ENCODE measurements at regions of chr10 and their contacts with region 1.

Region 1: GRCh38 chr10:22003079-22003913 is at the start of gene DNAJC1:
- DNase-seq: peak; percentile 96 to 98 (median 96)
- H3K4me3 ChIP-seq: peak within 1 kb of the TSS; percentile 62 to 89
- H3K4me3 Mint-ChIP-seq: peak within 1 kb of the TSS; percentile 94 to 100 (median 98)
- H3K27ac ChIP-seq: peak within 1 kb of the TSS; percentile 84
- H3K27ac Mint-ChIP-seq: peak within 1 kb of the TSS; percentile 91 to 99 (median 97)
- H3K4me1 ChIP-seq: peaks cover 26% of the 10 kb centered on the region
- H3K4me1 Mint-ChIP-seq: peaks cover 23 to 45% (median 34%) of the 10 kb centered on the region in 4 donors
- H3K27me3 ChIP-seq: peaks cover 3% of the 10 kb centered on the region
- H3K27me3 Mint-ChIP-seq: peaks cover 0 to 4% of the 10 kb centered on the region in 2 donors
- total RNA-seq, gene DNAJC1: 15.0 to 16.7 TPM

Region 2: GRCh38 chr10:22022257-22023032 is 19.1 kb after region 1 on chr10:
- CTCF ChIA-PET with region 1: interaction called, 3 read pairs
- POLR2A ChIA-PET with region 1: interaction called, 8 read pairs
- intact Hi-C with region 1: loop called (anchors 1 kb)
- DNase-seq: peak; percentile 51 to 75 (median 60)
- H3K4me3 ChIP-seq: peak overlapping the region in 1 of 2 donors; percentile 39
- H3K4me3 Mint-ChIP-seq: peak overlapping the region; percentile 69 to 91 (median 86)
- H3K27ac ChIP-seq: peak overlapping the region; percentile 45
- H3K27ac Mint-ChIP-seq: peak overlapping the region; percentile 75 to 97 (median 95)
- H3K4me1 ChIP-seq: peaks cover 18% of the 10 kb centered on the region
- H3K4me1 Mint-ChIP-seq: peaks cover 15 to 21% (median 19%) of the 10 kb centered on the region in 4 donors
- H3K27me3 ChIP-seq: no peaks in the 10 kb centered on the region
- H3K27me3 Mint-ChIP-seq: peaks cover 0 to 4% of the 10 kb centered on the region in 2 donors

Region 3: DNA sequence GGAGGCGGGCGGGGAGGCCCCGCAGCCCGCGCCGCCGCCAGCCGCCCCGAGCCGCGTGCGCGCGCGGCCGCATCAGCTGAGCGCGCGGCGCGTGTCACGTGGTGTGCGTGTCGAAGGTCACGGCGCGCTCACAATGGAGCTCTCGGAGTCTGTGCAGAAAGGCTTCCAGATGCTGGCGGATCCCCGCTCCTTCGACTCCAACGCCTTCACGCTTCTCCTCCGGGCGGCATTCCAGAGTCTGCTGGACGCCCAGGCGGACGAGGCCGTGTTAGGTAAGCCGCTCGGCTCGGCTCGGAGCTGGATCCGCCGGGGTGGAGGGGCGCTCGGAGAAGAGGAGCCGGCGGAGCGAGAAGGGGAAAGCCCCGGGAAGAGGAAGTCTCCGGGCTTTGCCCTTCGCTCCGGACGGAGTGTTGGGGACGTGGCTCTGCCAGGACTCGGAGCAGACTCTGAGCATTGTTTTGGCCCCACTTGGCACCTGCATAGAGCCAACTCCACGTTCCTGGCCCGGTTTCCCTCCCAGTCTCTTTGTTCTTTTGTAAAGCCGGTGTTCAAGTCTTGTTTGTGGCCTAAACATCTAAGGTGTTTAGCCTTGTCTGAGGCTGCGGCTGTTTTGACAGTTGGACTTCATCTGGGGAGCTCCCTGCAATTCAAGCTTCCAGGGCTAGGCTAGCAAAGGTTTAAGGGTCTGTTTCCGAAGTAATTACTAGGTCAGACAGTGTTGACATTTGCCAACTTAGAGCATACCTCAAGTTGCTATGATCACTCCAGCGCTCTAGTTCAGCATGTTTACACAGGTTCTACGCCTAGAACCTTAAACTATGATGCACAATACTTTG is 313.2 kb after region 1 on chr10 and contains the start of gene COMMD3:
- CTCF ChIA-PET with region 1: no interaction called
- POLR2A ChIA-PET with region 1: interaction called, 17 read pairs
- intact Hi-C with region 1: loop called (anchors 1 kb)
- DNase-seq: peak; percentile 78 to 86 (median 82)
- H3K4me3 ChIP-seq: peak within 1 kb of the TSS; percentile 77 to 95
- H3K4me3 Mint-ChIP-seq: peak within 1 kb of the TSS; percentile 94 to 99 (median 98)
- H3K27ac ChIP-seq: peak within 1 kb of the TSS; percentile 71
- H3K27ac Mint-ChIP-seq: peak within 1 kb of the TSS; percentile 89 to 98 (median 98)
- H3K4me1 ChIP-seq: peaks cover 37% of the 10 kb centered on the region
- H3K4me1 Mint-ChIP-seq: peaks cover 22 to 50% (median 29%) of the 10 kb centered on the region in 4 donors
- H3K27me3 ChIP-seq: no peaks in the 10 kb centered on the region
- H3K27me3 Mint-ChIP-seq: peaks cover 3 to 4% of the 10 kb centered on the region in 2 donors
- total RNA-seq, gene COMMD3: 67.9 to 68.5 TPM

Region 4: GRCh38 chr10:22550732-22551131 is 547.4 kb after region 1 on chr10:
- CTCF ChIA-PET with region 1: no interaction called
- POLR2A ChIA-PET with region 1: no interaction called
- intact Hi-C with region 1: loop called (anchors 5 kb)
- DNase-seq: peak; percentile 54 to 66 (median 59)
- H3K4me3 ChIP-seq: no peak overlapping the region
- H3K4me3 Mint-ChIP-seq: no peak overlapping the region
- H3K27ac ChIP-seq: no peak overlapping the region
- H3K27ac Mint-ChIP-seq: peak overlapping the region in 4 of 7 donors; percentile 2 to 86 (median 42)
- H3K4me1 ChIP-seq: no peaks in the 10 kb centered on the region
- H3K4me1 Mint-ChIP-seq: peaks cover 12 to 15% (median 13%) of the 10 kb centered on the region in 4 donors
- H3K27me3 ChIP-seq: no peaks in the 10 kb centered on the region
- H3K27me3 Mint-ChIP-seq: no peaks in the 10 kb centered on the region

Region 5: GRCh38 chr10:22831586-22831985 is 828.3 kb after region 1 on chr10:
- CTCF ChIA-PET with region 1: no interaction called
- POLR2A ChIA-PET with region 1: no interaction called
- intact Hi-C with region 1: no loop called
- DNase-seq: no peak
- H3K4me3 ChIP-seq: no peak overlapping the region
- H3K4me3 Mint-ChIP-seq: no peak overlapping the region
- H3K27ac ChIP-seq: no peak overlapping the region
- H3K27ac Mint-ChIP-seq: no peak overlapping the region
- H3K4me1 ChIP-seq: no peaks in the 10 kb centered on the region
- H3K4me1 Mint-ChIP-seq: no peaks in the 10 kb centered on the region
- H3K27me3 ChIP-seq: no peaks in the 10 kb centered on the region
- H3K27me3 Mint-ChIP-seq: no peaks in the 10 kb centered on the region

Measured in CD4-positive, alpha-beta memory T cell (primary cell).